Heart right ventricle (tissue), 16 donors: ENCODE measurements at regions of chr6 and their contacts with region 1.

Region 1: DNA sequence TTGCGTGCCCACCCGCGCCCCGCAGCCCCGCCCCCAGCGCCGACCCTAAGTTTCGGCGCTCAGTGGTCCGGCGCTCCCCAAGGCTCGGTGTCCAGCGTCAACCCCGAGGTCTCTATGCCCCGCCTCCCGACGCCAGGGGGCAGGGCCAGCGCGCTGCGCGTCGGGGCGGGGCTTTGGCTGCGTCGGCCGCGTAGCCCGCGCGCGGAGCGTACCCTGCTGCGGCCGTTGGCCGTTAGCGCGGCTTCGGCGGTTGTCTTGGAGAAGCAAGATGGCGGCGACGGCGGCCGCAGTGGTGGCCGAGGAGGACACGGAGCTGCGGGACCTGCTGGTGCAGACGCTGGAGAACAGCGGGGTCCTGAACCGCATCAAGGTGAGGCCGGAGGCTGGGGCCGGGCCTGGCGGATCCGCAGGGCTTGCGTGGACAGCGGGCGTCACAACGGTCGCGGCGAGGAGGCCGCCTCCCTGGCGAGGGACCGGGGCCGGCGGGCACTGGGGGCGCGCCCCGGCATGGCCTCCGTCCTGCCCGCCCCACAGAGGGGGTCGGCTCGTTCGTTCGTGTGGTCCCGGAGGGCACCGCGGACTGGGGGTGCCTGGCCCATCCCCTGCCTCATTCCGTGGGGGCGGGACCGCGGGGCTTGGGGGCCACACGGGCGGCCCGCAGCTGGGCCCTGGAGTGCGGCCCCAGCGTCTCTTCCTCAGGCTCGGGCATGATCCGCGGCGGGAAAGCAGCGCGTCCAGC is at the start of gene CEP43:
- DNase-seq: peak; percentile 94 to 96
- ATAC-seq: peak; percentile 98 to 99 (median 99)
- H3K4me3 ChIP-seq: peak within 1 kb of the TSS; percentile 75 to 97 (median 90)
- H3K27ac ChIP-seq: peak within 1 kb of the TSS in 9 of 10 donors; percentile 21 to 90 (median 78)
- H3K4me1 ChIP-seq: peaks cover 0 to 29% (median 21%) of the 10 kb centered on the region in 9 donors
- H3K27me3 ChIP-seq: no peaks in the 10 kb centered on the region
- CTCF ChIP-seq: peak in 2 of 9 donors; percentile 15 to 25
- total RNA-seq, gene CEP43: 7.5 to 15.0 (median 10.4) TPM

Region 2: GRCh38 chr6:166950443-166950821 is 48.9 kb before region 1 on chr6:
- intact Hi-C with region 1: loop called in 4 of 10 experiments (anchors 5 kb)
- DNase-seq: no peak
- ATAC-seq: peak; percentile 4 to 61 (median 23)
- H3K4me3 ChIP-seq: peak overlapping the region in 4 of 10 donors; percentile 39 to 54 (median 48)
- H3K27ac ChIP-seq: peak overlapping the region in 9 of 10 donors; percentile 67 to 89 (median 78)
- H3K4me1 ChIP-seq: peaks cover 0 to 54% (median 6%) of the 10 kb centered on the region in 9 donors
- H3K27me3 ChIP-seq: no peaks in the 10 kb centered on the region
- CTCF ChIP-seq: no peak

Region 3: GRCh38 chr6:166956444-166957086 is 42.7 kb before region 1 on chr6 and contains the start of gene RNASET2:
- intact Hi-C with region 1: loop called in 4 of 10 experiments (anchors 5 kb)
- DNase-seq: peak; percentile 97 to 99
- ATAC-seq: peak; percentile 98 to 99 (median 99)
- H3K4me3 ChIP-seq: peak within 1 kb of the TSS; percentile 63 to 95 (median 84)
- H3K27ac ChIP-seq: peak within 1 kb of the TSS; percentile 38 to 95 (median 78)
- H3K4me1 ChIP-seq: peaks cover 7 to 59% (median 20%) of the 10 kb centered on the region in 9 donors
- H3K27me3 ChIP-seq: no peaks in the 10 kb centered on the region
- CTCF ChIP-seq: no peak
- total RNA-seq, gene RNASET2: 7.1 to 44.3 (median 12.1) TPM

Region 4: DNA sequence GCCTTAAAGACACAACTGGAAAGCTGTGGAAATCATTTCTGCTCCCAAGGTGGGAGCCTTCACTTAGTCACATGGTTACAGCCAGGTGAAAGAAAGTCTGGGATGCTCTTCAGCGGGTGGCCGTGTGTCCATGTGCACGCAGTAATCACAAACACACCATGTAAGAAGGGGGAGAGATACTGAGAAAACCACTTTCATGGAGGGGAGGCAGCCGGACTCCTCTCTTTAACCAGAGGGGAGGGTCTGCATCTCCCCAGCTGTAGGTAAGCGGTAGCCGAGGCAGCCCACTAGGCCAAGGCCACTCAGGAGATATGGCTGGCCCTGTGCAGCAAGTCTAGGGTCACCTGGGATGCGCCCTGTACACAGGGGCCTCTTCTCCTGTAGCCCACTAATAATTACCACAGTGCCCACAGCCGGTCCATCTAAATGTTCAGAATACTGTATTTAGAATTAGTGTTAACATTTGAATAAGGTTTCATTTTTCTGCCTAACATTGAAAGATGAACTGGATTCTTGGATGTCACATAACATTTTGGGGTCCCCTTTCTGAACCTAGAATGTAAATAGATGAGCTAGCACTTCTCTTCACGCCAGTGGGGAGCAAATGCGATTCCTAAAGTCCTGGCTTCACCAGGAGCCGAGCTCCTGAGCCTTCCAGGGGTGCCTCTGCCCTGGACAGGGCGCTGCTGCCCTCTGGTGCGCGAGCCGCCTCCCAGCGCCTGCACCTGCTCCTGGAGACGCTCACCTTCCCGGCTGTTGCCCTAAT is 142.5 kb after region 1 on chr6:
- intact Hi-C with region 1: loop called in 8 of 10 experiments (anchors 2 to 10 kb)
- DNase-seq: peak; percentile 18 to 56
- ATAC-seq: peak; percentile 71 to 91 (median 86)
- H3K4me3 ChIP-seq: no peak overlapping the region
- H3K27ac ChIP-seq: no peak overlapping the region
- H3K4me1 ChIP-seq: peaks cover 0 to 5% (median 0%) of the 10 kb centered on the region in 9 donors
- H3K27me3 ChIP-seq: peaks cover 0 to 69% (median 54%) of the 10 kb centered on the region in 7 donors
- CTCF ChIP-seq: peak; percentile 50 to 82 (median 76)